IMR-90 (cell line): ENCODE measurements at regions of chr5 and their contacts with region 1.

Region 1: DNA sequence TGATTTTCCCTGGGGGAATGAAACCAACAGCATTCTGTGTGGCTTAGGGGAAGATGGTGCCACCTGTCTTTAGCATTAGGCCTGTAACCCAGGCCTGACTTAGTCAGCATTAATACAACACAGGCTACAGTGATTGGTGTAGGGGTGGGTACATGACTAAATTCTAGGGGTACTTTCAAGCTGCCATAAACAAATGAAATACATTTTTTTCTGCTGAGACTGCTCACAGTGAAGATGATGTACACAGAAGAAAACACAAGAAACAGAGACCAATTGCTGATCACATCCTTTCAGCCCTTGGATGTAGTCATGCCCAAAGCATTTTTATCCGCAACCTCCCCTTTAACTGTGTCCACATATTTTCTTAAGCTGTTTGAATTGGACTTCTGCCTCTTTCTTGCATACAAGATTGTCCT is 527.2 kb downstream of the KCTD16 start:
- DNase-seq: peak; percentile 97
- ATAC-seq: peak; percentile 97
- H3K4me3 ChIP-seq: no peak overlapping the region
- H3K27ac ChIP-seq: no peak overlapping the region
- H3K4me1 ChIP-seq: peaks cover 2% of the 10 kb centered on the region; the same call in 1 of the 2 replicates
- H3K27me3 ChIP-seq: no peaks in the 10 kb centered on the region
- CTCF ChIP-seq: peak; percentile 36
- POLR2A ChIP-seq: no peak
- RAD21 ChIP-seq: peak; percentile 5; the same call in 1 of the 2 replicates

Region 2: DNA sequence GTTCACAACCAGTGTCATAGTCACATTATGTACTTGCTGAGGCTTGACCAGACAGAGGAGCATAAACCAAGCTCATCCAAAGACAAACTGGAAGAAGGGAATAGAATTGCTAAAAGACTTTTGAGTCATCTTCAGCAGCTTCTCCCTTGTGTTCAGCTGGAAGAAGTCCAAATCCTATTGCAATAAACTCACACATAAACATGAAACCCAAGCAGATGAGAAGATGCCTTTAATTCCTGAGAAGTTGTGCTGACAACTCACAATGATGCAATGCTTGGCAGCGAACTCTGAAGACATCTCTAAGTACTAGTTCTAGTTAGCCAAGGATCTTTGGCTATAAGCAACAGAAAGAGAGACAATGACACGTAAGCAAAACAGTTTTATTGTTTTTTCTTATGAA is 114.9 kb after region 1 on chr5:
- CTCF ChIA-PET with region 1: no interaction called
- POLR2A ChIA-PET with region 1: no interaction called
- dilution Hi-C with region 1: no loop called
- in situ Hi-C with region 1: no loop called
- intact Hi-C with region 1: loop called (anchors 2 kb)
- DNase-seq: peak; percentile 90
- ATAC-seq: peak; percentile 87
- H3K4me3 ChIP-seq: no peak overlapping the region
- H3K27ac ChIP-seq: no peak overlapping the region
- H3K4me1 ChIP-seq: no peaks in the 10 kb centered on the region
- H3K27me3 ChIP-seq: no peaks in the 10 kb centered on the region
- CTCF ChIP-seq: no peak
- POLR2A ChIP-seq: no peak
- RAD21 ChIP-seq: no peak

Region 3: GRCh38 chr5:145246961-145247744 is 549.3 kb after region 1 on chr5:
- CTCF ChIA-PET with region 1: no interaction called
- POLR2A ChIA-PET with region 1: no interaction called
- dilution Hi-C with region 1: no loop called
- in situ Hi-C with region 1: no loop called
- intact Hi-C with region 1: loop called (anchors 10 kb)
- DNase-seq: peak; percentile 39
- ATAC-seq: peak; percentile 35; the same call in 1 of the 2 replicates
- H3K4me3 ChIP-seq: no peak overlapping the region
- H3K27ac ChIP-seq: no peak overlapping the region; the same call in 1 of the 2 replicates
- H3K4me1 ChIP-seq: peaks cover 13% of the 10 kb centered on the region
- H3K27me3 ChIP-seq: no peaks in the 10 kb centered on the region
- CTCF ChIP-seq: no peak
- POLR2A ChIP-seq: no peak
- RAD21 ChIP-seq: no peak